CD14-positive monocyte (primary cell): ENCODE measurements at regions of chr5 and their contacts with region 1.

Region 1: GRCh38 chr5:91419571-91420537 is 36.7 kb upstream of the ARRDC3 start:
- DNase-seq: peak; percentile 55 to 74 (median 61)
- H3K4me3 ChIP-seq: no peak overlapping the region
- H3K4me3 Mint-ChIP-seq: no peak overlapping the region
- H3K27ac ChIP-seq: no peak overlapping the region
- H3K27ac Mint-ChIP-seq: no peak overlapping the region
- H3K4me1 ChIP-seq: peaks cover 0 to 5% of the 10 kb centered on the region in 2 donors
- H3K4me1 Mint-ChIP-seq: peaks cover 6% of the 10 kb centered on the region
- H3K27me3 ChIP-seq: no peaks in the 10 kb centered on the region
- H3K27me3 Mint-ChIP-seq: peaks cover 0 to 3% (median 1%) of the 10 kb centered on the region in 3 donors
- CTCF ChIP-seq: peak; percentile 79

Region 2: GRCh38 chr5:90866333-90866732 is 553.5 kb before region 1 on chr5:
- intact Hi-C with region 1: loop called (anchors 2 to 5 kb)
- DNase-seq: peak in 2 of 3 donors; percentile 7 to 44
- H3K4me3 ChIP-seq: no peak overlapping the region
- H3K4me3 Mint-ChIP-seq: no peak overlapping the region
- H3K27ac ChIP-seq: no peak overlapping the region
- H3K27ac Mint-ChIP-seq: no peak overlapping the region
- H3K4me1 ChIP-seq: no peaks in the 10 kb centered on the region
- H3K4me1 Mint-ChIP-seq: peaks cover 2% of the 10 kb centered on the region
- H3K27me3 ChIP-seq: no peaks in the 10 kb centered on the region
- H3K27me3 Mint-ChIP-seq: no peaks in the 10 kb centered on the region
- CTCF ChIP-seq: peak; percentile 61

Region 3: DNA sequence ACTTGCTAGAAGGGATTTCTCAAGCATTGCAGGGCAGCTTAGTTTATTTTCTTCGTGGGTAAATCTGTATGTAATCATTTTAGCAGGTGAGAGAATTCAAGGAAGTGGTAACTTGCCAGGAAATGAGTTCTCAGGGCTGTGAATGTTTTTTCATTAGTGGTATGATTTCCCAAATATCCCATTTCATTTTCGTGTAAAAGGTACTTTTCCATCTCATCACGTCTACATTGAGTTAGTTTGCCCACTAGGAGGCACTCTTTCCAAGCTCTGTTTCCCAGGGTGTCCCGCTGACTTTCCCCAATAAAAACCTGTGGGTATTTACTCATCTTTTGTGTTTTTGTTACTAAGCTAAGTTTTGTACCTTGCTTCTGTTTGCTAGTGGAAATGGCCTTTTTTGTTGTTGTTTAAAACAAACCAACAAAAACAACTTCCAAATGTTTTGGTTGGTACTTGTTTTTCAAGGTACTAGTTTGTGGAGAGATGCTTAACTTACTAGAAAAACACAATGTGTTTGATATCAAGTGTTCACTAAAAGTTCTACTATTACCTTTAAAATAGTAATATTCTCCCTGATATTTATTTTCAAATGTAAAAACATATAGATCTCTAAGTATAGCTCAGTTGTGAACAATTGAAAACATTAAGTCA is 487.7 kb before region 1 on chr5:
- intact Hi-C with region 1: loop called (anchors 5 kb)
- DNase-seq: peak; percentile 25 to 55 (median 55)
- H3K4me3 ChIP-seq: no peak overlapping the region
- H3K4me3 Mint-ChIP-seq: no peak overlapping the region
- H3K27ac ChIP-seq: no peak overlapping the region
- H3K27ac Mint-ChIP-seq: no peak overlapping the region
- H3K4me1 ChIP-seq: no peaks in the 10 kb centered on the region
- H3K4me1 Mint-ChIP-seq: peaks cover 1% of the 10 kb centered on the region
- H3K27me3 ChIP-seq: no peaks in the 10 kb centered on the region
- H3K27me3 Mint-ChIP-seq: peaks cover 0 to 1% (median 0%) of the 10 kb centered on the region in 3 donors
- CTCF ChIP-seq: peak; percentile 85

Region 4: DNA sequence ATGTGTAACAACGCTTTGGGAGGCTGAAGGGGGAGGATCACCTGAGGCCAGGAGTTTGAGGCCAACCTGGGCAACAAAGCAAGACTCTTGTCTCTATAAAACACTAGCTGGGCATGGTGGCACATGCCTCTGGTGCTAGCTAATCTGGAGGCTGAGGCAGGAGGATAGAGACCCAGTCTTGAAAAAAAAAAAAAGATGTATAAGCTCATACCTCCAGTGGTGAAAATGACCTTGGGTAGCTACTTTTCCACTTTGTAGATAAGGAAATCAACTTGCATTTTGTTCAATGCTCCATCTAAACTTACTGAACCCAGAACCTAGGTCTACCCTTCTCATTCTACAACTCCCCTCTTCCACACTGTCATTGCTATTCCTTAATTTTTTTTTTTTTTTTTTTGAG is 53.3 kb before region 1 on chr5:
- intact Hi-C with region 1: no loop called
- DNase-seq: no peak
- H3K4me3 ChIP-seq: no peak overlapping the region
- H3K4me3 Mint-ChIP-seq: no peak overlapping the region
- H3K27ac ChIP-seq: no peak overlapping the region
- H3K27ac Mint-ChIP-seq: peak overlapping the region in 1 of 7 donors; percentile 60
- H3K4me1 ChIP-seq: no peaks in the 10 kb centered on the region
- H3K4me1 Mint-ChIP-seq: peaks cover 4% of the 10 kb centered on the region
- H3K27me3 ChIP-seq: no peaks in the 10 kb centered on the region
- H3K27me3 Mint-ChIP-seq: peaks cover 0 to 3% (median 1%) of the 10 kb centered on the region in 3 donors
- CTCF ChIP-seq: no peak